ENCODE measurements at regions of chr17 and their contacts with region 1.

Region 1: GRCh38 chr17:19513897-19514488 is 19.7 kb upstream of the SLC47A1 start:
- DNase-seq: peak; percentile 32 to 64 (median 38)
- ATAC-seq: peak; percentile 74
- H3K4me3 ChIP-seq: no peak overlapping the region
- H3K27ac ChIP-seq: no peak overlapping the region
- H3K4me1 ChIP-seq: no peaks in the 10 kb centered on the region
- H3K27me3 ChIP-seq: peaks cover 0 to 5% of the 10 kb centered on the region in 2 experiments; a peak in 1 of 5 replicates
- CTCF ChIP-seq: peak; percentile 77 to 81 (median 78)
- EP300 ChIP-seq: no peak
- POLR2A ChIP-seq: no peak
- RAD21 ChIP-seq: peak; percentile 65 to 79

Region 2: DNA sequence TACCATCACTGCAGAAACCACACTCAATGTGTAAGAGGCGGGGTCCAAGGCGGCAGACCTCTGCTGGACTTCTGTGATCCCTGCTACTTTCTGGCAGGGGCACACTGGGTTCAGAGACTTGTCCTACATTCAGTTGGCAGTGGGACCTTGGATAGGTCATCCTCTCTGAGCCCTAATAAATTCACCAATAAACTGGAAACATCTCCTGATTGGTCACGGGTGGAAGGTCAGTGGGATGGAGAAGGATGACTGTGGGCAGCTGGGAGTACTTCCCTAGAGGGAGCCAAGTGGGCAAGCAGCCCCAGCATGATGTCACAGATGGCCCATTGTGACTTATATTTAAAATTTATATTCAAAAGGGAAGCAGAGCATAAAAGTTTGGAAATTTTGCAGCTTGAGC is 53.3 kb before region 1 on chr17:
- CTCF ChIA-PET with region 1: no interaction called
- POLR2A ChIA-PET with region 1: no interaction called
- in situ Hi-C with region 1: no loop called
- intact Hi-C with region 1: no loop called
- DNase-seq: no peak
- ATAC-seq: no peak
- H3K4me3 ChIP-seq: no peak overlapping the region
- H3K27ac ChIP-seq: no peak overlapping the region
- H3K4me1 ChIP-seq: no peaks in the 10 kb centered on the region
- H3K27me3 ChIP-seq: peaks cover 0 to 9% of the 10 kb centered on the region in 2 experiments; a peak in 1 of 5 replicates
- CTCF ChIP-seq: no peak
- EP300 ChIP-seq: no peak
- POLR2A ChIP-seq: no peak
- RAD21 ChIP-seq: no peak

Region 3: GRCh38 chr17:19645608-19646250 is 131.7 kb after region 1 on chr17:
- CTCF ChIA-PET with region 1: no interaction called
- POLR2A ChIA-PET with region 1: interaction called, 3 read pairs
- in situ Hi-C with region 1: no loop called
- intact Hi-C with region 1: loop called (anchors 1 kb)
- DNase-seq: peak; percentile 32 to 36 (median 35)
- ATAC-seq: peak; percentile 71
- H3K4me3 ChIP-seq: no peak overlapping the region
- H3K27ac ChIP-seq: no peak overlapping the region
- H3K4me1 ChIP-seq: peaks cover 0 to 13% of the 10 kb centered on the region in 2 experiments; a peak in 2 of 5 replicates
- H3K27me3 ChIP-seq: peaks cover 2 to 17% of the 10 kb centered on the region in 2 experiments; a peak in 3 of 5 replicates
- CTCF ChIP-seq: peak; percentile 36 to 60 (median 55); a peak in 5 of 6 replicates
- EP300 ChIP-seq: no peak
- POLR2A ChIP-seq: no peak
- RAD21 ChIP-seq: peak in 1 of 2 experiments; percentile 41; a peak in 2 of 4 replicates

Region 4: DNA sequence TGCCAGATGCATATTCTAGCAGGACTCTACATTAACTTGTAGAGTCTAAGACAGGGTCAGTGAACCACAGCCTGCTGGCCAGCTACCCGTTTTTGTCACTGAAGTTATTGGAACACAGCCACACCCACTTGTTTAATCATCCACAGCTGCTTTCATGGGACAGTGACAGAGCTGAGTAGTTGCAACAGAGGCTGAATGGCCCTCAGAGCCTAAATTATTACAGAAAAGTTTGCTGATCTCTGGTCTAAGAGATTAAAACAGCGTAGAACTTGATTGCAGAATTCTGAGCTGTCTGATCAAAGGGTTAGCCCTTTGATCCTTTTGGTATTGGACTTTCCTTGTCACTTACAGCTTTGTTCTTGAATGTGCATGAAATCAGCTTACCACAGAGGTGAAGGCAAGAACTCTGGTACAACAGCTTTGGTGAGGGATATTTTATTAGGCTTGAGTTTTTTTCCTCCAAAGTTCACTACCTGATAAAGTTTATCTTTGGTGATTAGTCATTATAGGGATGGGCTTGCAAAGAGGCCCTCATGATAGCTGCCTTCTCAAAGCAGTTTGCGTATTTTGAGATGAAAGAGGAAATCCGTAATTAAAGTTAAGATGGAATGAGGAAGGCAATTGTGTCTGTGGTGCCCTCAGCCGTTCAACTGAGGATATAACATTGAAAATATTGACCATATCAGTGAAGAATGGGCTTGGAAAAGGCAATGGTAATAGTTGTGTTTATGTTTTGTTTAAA is 158.2 kb after region 1 on chr17:
- CTCF ChIA-PET with region 1: no interaction called
- POLR2A ChIA-PET with region 1: no interaction called
- in situ Hi-C with region 1: no loop called
- intact Hi-C with region 1: loop called (anchors 10 kb)
- DNase-seq: no peak
- ATAC-seq: no peak
- H3K4me3 ChIP-seq: no peak overlapping the region
- H3K27ac ChIP-seq: no peak overlapping the region
- H3K4me1 ChIP-seq: no peaks in the 10 kb centered on the region
- H3K27me3 ChIP-seq: no peaks in the 10 kb centered on the region
- CTCF ChIP-seq: peak in 2 of 3 experiments; percentile 24 to 29; a peak in 2 of 6 replicates
- EP300 ChIP-seq: no peak
- POLR2A ChIP-seq: no peak
- RAD21 ChIP-seq: peak; percentile 17 to 40; a peak in 1 of 4 replicates

Region 5: GRCh38 chr17:19766422-19767270 is 252.7 kb after region 1 on chr17:
- CTCF ChIA-PET with region 1: interaction called, 6 read pairs
- POLR2A ChIA-PET with region 1: no interaction called
- in situ Hi-C with region 1: loop called (anchors 5 kb)
- intact Hi-C with region 1: loop called (anchors 1 kb)
- DNase-seq: peak; percentile 69 to 72 (median 70)
- ATAC-seq: peak; percentile 99
- H3K4me3 ChIP-seq: no peak overlapping the region
- H3K27ac ChIP-seq: no peak overlapping the region
- H3K4me1 ChIP-seq: no peaks in the 10 kb centered on the region
- H3K27me3 ChIP-seq: peaks cover 0 to 14% of the 10 kb centered on the region in 2 experiments; a peak in 1 of 5 replicates
- CTCF ChIP-seq: peak; percentile 79 to 87 (median 80)
- EP300 ChIP-seq: no peak
- POLR2A ChIP-seq: no peak
- RAD21 ChIP-seq: peak; percentile 66 to 87

Region 6: DNA sequence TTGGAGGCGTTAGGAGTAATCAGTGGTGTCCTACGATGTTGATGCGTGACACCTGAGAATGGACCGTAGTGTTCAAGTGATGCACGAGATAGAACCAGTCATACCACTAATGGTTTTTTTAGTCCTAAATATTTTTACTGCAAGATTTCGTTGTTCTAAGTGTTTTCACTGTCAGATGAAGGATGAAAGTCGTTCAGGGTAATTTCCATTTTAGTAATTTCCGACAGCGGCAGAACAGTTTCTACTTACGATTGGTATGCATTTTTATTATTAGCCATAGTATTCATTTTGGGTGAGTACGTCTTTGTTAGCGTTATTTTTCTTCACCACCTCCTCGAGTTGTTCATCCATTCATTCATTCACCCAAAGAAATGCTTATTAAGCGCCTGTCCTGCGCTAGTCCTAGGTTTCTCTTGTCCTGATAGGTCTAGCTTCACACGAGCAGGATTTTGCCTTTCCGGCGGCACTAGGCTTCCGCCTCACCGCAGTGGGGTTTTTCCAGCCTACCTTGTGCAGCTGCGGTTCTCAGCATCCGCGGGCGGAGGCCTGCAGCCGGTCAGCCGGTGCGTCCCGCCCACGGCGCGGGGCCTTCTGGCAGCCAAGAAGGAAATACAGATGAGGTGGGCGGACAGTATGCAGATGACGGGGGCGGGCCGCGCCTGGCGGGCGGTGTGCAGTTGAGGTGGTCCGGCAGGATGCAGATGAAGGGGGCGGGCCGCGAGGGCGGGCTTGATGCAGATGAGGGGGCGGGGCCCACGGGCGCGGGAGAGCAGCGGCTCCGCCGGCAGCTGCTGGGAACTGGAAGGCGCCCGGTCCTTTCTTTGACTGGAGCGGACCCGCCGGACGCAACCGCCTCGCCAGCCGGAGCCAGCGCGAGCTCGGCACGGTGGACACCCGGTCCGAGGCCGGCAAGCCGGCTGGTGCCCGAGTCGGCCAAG is 641.5 kb after region 1 on chr17:
- CTCF ChIA-PET with region 1: no interaction called
- POLR2A ChIA-PET with region 1: no interaction called
- in situ Hi-C with region 1: no loop called
- intact Hi-C with region 1: no loop called
- DNase-seq: peak; percentile 92 to 97 (median 94)
- ATAC-seq: peak; percentile 98
- H3K4me3 ChIP-seq: peak overlapping the region; percentile 65
- H3K27ac ChIP-seq: peak overlapping the region; percentile 70; the same call in 2 of the 3 replicates
- H3K4me1 ChIP-seq: peaks cover 5 to 18% of the 10 kb centered on the region in 2 experiments; a peak in 4 of 5 replicates
- H3K27me3 ChIP-seq: no peaks in the 10 kb centered on the region
- CTCF ChIP-seq: no peak
- EP300 ChIP-seq: no peak
- POLR2A ChIP-seq: peak; percentile 46; the same call in 1 of the 2 replicates
- RAD21 ChIP-seq: no peak

Measured in K562 (cell line).